ENCODE measurements at regions of chr14 and their contacts with region 1.

Region 1: GRCh38 chr14:49879683-49880204 is 13.1 kb upstream of the ARF6 start:
- DNase-seq: peak; percentile 74

Region 2: DNA sequence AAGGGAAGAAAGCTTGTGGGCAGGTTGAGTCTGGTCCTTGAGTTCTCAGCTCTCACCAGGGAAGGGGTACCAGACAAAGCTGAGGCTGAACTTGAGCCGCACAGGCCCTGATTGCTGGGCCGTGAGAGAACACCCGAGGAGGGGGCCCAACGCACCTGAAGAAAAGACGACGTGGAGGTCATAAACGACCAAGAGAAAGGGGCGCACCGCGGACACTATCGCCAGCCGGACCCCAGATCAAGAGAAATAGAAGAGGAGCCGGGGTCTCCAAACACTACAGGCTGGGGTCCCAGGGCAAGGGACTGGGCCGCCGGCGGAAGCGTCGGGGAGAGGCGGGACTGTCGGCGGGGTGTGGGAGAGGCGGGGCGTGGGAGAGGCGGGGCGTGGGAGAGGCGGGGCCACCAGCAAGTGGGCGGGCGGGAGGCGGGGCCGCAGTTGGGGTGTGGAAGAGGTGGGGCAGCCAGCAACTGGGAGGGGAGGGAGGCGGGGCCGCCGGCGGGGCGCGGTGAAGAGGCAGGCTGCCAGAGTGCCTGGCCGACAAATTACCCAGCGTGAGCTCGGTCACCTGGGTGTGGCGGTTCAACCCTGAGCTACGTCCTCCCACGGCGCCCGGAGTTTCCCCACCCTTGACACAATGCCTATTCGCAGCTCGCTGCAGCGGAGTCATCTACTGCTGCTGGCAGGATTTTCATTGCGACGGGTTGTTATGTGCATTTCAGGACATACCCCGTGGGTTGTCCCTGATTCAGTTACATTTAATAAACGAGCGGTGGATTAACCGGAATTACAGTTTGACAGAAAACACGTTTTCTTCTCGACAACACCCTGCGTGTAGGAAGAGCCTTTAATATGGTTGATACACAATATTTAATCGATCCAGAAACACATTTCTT is 11.7 kb before region 1 on chr14:
- CTCF ChIA-PET with region 1: interaction called, 14 read pairs
- POLR2A ChIA-PET with region 1: interaction called, 11 read pairs
- DNase-seq: peak; percentile 94

Region 3: DNA sequence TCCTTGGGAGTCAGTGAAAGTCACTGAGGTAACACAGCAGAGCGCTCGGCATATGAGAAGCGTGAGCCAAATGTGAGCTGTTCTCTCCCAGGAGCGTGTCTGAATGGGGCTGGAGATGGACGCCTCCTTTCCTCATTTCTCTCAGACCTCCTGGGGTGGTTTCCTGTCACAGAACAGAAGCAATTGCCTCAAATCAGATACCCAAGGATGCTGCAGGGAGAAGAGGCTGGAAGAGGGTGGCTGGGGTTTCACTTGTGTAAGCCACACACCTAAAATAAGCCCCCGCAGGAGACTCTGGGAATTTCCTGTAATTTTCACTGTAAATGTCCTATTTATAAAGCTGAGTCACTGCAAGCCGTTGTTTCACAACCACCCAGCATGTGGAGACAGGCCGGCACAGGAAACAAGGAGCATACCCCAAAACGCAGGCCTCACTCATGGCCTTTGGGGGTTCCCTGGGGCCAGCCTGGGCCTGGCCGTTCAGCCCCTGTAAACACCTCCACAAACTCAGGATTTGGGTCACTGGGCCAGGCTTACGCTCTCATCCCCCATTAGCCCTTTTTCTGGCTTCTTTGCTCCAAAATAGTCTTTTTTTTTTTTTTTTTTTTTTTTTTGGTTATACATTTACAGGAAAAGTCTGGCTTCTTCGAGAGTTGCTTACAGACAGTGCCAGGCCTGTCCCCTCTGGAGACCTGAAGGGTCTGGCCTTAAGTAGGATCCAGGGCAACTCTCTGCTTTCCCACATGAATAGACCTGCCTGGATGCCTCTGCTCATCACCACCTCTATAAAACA is 181.3 kb after region 1 on chr14:
- CTCF ChIA-PET with region 1: interaction called, 13 read pairs
- POLR2A ChIA-PET with region 1: interaction called, 5 read pairs
- DNase-seq: peak; percentile 42

Measured in HEK293T (cell line).